ENCODE measurements at regions of chr2 and their contacts with region 1.

Region 1: DNA sequence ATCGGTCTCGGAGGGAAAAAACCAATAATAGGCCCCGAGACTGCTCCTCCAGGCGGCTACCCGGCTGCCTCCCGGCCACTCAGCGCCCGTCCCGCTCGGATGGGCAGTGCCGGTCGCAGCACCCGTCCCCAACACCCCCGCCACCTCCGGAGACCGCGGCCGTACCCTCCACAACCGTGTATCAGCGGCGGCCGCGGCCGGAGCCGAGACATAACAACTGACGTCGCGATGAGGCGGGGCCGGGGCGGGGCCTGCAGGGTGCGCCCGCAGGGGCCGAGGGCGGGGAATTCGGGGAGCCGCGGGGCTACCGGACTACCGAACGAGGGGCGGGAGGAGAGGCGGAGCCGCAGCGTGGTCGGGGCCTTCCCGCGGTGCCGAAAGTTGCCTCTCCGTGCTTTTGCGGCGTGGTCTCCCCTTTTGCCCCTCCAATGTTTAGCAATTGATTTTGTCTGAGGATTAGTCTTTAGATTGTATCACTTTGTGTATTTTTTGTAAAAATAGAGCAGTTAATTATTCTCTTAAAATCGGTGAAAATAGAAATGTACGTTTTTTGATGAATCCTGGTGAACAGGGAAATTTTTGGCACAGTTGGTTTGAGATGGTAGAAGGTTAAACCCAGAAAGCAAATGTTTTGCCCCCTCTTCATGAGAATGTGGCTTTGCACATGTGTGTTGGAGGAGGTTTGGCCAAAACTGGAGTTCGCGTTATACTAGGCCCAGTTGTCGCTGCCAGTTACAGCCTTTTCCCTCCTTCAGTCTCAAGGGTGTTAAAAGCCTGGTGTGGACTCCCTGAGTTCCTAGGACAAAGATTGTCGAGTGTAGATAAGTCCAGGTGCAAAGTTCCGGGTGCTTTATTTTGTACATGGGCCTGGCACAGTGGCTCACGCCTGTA is at the start of gene RNF103:
- DNase-seq: peak; percentile 98
- ATAC-seq: peak; percentile 95 to 97
- total RNA-seq, gene RNF103: 32.2 to 43.9 TPM

Region 2: DNA sequence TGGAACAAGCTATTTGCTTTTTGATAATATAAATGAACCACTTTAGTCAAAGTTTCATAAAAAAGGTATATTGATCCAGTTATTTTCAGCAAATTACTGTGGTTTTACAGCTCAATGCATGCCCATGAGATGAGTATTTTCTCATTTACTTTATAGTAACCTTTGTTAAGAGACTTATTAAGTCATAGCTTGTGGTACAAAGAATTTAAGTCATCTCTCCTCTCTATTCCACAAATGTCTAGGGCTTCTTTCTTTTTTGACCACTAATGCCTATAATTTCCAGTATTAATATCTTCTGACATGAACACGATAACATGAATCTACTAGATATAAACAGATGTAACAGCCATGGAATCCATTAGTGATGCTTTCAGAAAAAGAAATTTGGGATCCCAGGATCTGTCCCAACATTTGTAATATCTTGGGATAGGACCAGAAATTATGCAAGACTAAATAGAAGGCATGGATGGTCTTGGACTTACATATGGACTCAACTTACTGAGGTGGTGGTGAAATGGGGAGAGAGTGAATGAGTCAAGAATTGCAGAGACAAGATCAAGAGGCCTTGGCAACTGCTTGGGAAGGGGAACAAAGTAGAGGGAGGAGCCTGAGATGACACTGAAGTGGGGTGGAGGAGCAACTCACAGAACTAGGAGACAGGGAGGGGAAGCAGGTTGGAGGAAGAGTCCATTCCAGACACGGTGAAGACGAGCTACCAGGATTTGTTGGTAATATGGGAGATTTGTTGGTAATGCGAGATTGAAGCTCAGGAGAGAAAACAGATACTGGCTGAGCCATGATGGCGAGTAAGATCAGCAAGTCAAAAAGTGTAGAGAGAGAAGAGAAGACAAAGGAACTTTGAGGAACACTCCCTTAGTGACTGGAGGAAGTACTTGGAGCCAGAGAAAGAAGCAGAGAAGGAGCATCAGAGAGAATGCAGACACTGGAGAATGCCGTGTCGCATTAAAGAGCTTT is 225.1 kb before region 1 on chr2:
- intact Hi-C with region 1: no loop called
- DNase-seq: no peak
- ATAC-seq: no peak

Region 3: DNA sequence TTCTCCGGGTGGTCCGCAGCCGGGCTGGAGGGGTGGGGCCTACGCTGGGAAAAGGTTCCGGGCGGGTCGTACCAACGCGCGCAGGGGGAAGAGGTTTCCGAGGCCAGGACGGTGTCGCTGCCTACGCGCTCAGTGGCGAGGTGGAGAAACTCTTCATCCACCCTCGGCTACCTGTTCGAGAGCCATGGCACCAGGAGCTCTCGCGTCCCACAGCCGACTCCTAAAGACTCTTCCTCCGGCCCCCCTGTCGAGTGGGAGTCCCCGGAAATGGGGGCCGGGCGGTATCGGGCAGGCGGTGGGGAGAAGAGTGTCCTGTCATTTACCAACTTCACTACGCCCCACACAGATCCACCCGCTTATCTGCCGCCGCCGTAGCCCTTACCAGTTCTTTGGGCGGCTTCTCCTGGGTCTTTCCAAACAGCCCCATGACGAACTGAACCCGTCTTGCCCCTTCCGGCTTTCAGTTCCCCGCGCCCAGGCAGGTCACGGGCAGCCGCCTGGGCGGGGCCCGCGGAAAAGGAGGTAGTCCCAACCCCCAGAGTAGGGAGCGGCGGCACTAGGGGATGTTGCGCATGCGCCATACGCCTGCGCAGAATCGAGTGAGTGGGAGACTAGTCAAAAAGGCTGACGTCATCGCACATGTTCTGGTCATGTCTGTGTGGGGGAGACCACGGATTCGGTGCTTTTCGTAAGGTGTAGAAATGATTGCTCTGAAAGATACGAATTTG is 60.8 kb before region 1 on chr2 and contains the start of gene CHMP3:
- intact Hi-C with region 1: loop called in 1 of 2 experiments (anchors 5 kb)
- DNase-seq: peak; percentile 98
- ATAC-seq: peak; percentile 97 to 98
- total RNA-seq, gene CHMP3: 146 to 152 TPM